HCT116 (cell line): ENCODE measurements at regions of chr7 and their contacts with region 1.

Region 1: GRCh38 chr7:113421696-113422330 is 303.5 kb upstream of the SMIM30 start:
- DNase-seq: peak; percentile 88
- ATAC-seq: peak; percentile 100
- H3K4me3 ChIP-seq: no peak overlapping the region
- H3K27ac ChIP-seq: no peak overlapping the region
- H3K4me1 ChIP-seq: no peaks in the 10 kb centered on the region
- H3K27me3 ChIP-seq: no peaks in the 10 kb centered on the region
- CTCF ChIP-seq: peak; percentile 85 to 96 (median 89)
- POLR2A ChIP-seq: no peak
- RAD21 ChIP-seq: peak; percentile 82

Region 2: DNA sequence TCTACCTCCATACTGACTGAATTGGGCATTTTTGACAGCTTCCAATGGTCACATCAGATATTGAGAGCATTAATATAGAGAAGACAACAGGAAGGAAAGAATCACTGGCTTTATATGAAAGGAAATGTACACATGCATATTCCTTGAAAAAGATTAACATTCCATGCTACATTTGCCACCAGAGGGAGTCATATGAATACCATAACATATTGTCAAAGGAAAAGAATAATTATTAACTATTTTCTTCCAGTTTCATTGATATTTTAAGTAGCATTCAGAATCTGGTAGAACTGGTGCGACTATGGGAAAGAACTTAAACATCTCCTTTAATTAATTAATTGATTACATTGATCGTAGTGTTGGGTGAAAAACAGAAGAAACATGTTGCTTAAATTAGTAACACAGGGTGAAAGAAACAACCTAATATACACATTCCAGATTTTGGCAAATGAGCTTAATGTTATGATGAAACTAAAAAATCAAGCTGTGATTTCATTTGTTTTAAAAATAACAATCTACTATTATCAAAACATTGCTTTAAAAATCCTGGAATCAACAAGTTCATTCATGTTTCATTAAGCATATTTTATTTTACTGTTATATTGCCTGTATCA is 406.7 kb before region 1 on chr7:
- CTCF ChIA-PET with region 1: interaction called, 18 read pairs
- POLR2A ChIA-PET with region 1: no interaction called
- RAD21 ChIA-PET with region 1: interaction called in 1 of 2 experiments, 8 read pairs
- intact Hi-C with region 1: loop called (anchors 1 kb)
- DNase-seq: peak; percentile 27
- ATAC-seq: peak; percentile 59; the same call in 1 of the 2 replicates
- H3K4me3 ChIP-seq: no peak overlapping the region
- H3K27ac ChIP-seq: no peak overlapping the region
- H3K4me1 ChIP-seq: no peaks in the 10 kb centered on the region
- H3K27me3 ChIP-seq: no peaks in the 10 kb centered on the region
- CTCF ChIP-seq: peak; percentile 33 to 68 (median 56); a peak in 5 of 6 replicates
- POLR2A ChIP-seq: no peak
- RAD21 ChIP-seq: peak; percentile 82

Region 3: GRCh38 chr7:113159746-113160339 is 262.0 kb before region 1 on chr7:
- CTCF ChIA-PET with region 1: interaction called, 33 read pairs
- POLR2A ChIA-PET with region 1: no interaction called
- RAD21 ChIA-PET with region 1: interaction called, 3 to 5 read pairs
- intact Hi-C with region 1: loop called (anchors 1 kb)
- DNase-seq: peak; percentile 39
- ATAC-seq: peak; percentile 93
- H3K4me3 ChIP-seq: no peak overlapping the region
- H3K27ac ChIP-seq: no peak overlapping the region
- H3K4me1 ChIP-seq: no peaks in the 10 kb centered on the region
- H3K27me3 ChIP-seq: no peaks in the 10 kb centered on the region
- CTCF ChIP-seq: peak; percentile 60 to 78 (median 75); a peak in 5 of 6 replicates
- POLR2A ChIP-seq: no peak
- RAD21 ChIP-seq: peak; percentile 75

Region 4: DNA sequence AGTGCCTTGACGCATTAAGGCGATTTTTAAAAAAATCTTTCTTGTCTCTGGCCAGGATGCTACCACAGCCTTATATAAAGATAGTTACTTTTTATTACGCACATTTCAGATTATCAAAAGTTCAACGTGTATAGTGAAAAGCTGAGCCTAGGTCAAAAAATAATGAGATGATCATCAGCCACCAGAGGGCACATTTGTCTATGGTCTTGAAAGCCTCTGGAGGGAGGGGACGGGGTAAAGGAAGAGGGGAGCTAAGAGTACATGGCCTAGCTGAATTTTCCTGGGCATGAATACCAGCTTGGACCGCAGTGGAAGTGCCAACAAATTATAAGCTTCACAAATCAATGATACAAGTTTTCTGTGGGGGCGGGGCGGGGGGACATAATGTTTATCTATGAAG is 17.6 kb before region 1 on chr7:
- CTCF ChIA-PET with region 1: interaction called, 22 read pairs
- POLR2A ChIA-PET with region 1: no interaction called
- RAD21 ChIA-PET with region 1: no interaction called
- intact Hi-C with region 1: no loop called
- DNase-seq: peak; percentile 29
- ATAC-seq: peak; percentile 87
- H3K4me3 ChIP-seq: no peak overlapping the region
- H3K27ac ChIP-seq: no peak overlapping the region
- H3K4me1 ChIP-seq: no peaks in the 10 kb centered on the region
- H3K27me3 ChIP-seq: no peaks in the 10 kb centered on the region
- CTCF ChIP-seq: peak; percentile 40 to 55 (median 43); a peak in 5 of 6 replicates
- POLR2A ChIP-seq: no peak
- RAD21 ChIP-seq: peak; percentile 58

Region 5: DNA sequence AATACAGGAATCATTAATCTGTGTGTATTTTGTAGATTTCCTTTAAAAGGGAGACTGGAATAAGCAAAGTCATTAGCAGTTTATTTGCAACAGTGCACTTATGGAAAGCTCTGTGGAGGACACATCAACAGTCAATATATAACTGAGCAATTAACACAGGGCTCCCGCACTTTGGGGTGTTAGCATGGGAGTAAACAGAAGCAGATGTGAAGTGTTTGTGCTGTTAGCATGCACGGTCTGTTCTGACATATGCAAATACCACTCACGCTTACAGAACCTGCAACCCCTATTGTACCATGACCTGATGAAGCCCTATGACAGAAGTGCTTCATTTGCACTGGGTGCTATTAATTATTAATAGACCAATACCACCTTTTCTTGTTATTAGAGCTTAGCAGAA is 378.1 kb after region 1 on chr7:
- CTCF ChIA-PET with region 1: no interaction called
- POLR2A ChIA-PET with region 1: no interaction called
- RAD21 ChIA-PET with region 1: no interaction called
- intact Hi-C with region 1: no loop called
- DNase-seq: no peak
- ATAC-seq: no peak
- H3K4me3 ChIP-seq: no peak overlapping the region
- H3K27ac ChIP-seq: no peak overlapping the region
- H3K4me1 ChIP-seq: no peaks in the 10 kb centered on the region
- H3K27me3 ChIP-seq: no peaks in the 10 kb centered on the region
- CTCF ChIP-seq: no peak
- POLR2A ChIP-seq: no peak
- RAD21 ChIP-seq: no peak